ENCODE measurements at regions of chr12 and their contacts with region 1.

Region 1: GRCh38 chr12:76348079-76348901 is at the start of gene BBS10:
- DNase-seq: peak; percentile 92
- ATAC-seq: peak; percentile 98
- H3K4me3 Mint-ChIP-seq: peak within 1 kb of the TSS; percentile 95
- H3K27ac Mint-ChIP-seq: peak within 1 kb of the TSS; percentile 92
- H3K4me1 Mint-ChIP-seq: peaks cover 22% of the 10 kb centered on the region
- H3K27me3 Mint-ChIP-seq: no peaks in the 10 kb centered on the region
- CTCF ChIP-seq: peak; percentile 46
- total RNA-seq, gene BBS10: 3.7 to 3.9 TPM

Region 2: GRCh38 chr12:76455582-76456345 is 107.5 kb after region 1 on chr12:
- CTCF ChIA-PET with region 1: interaction called, 14 read pairs
- POLR2A ChIA-PET with region 1: interaction called, 4 read pairs
- intact Hi-C with region 1: no loop called
- DNase-seq: peak; percentile 43
- ATAC-seq: peak; percentile 97
- H3K4me3 Mint-ChIP-seq: no peak overlapping the region
- H3K27ac Mint-ChIP-seq: peak overlapping the region; percentile 27
- H3K4me1 Mint-ChIP-seq: peaks cover 22% of the 10 kb centered on the region
- H3K27me3 Mint-ChIP-seq: no peaks in the 10 kb centered on the region
- CTCF ChIP-seq: peak; percentile 64